Ascending aorta (tissue), 2 donors: ENCODE measurements at regions of chr5 and their contacts with region 1.

Region 1: DNA sequence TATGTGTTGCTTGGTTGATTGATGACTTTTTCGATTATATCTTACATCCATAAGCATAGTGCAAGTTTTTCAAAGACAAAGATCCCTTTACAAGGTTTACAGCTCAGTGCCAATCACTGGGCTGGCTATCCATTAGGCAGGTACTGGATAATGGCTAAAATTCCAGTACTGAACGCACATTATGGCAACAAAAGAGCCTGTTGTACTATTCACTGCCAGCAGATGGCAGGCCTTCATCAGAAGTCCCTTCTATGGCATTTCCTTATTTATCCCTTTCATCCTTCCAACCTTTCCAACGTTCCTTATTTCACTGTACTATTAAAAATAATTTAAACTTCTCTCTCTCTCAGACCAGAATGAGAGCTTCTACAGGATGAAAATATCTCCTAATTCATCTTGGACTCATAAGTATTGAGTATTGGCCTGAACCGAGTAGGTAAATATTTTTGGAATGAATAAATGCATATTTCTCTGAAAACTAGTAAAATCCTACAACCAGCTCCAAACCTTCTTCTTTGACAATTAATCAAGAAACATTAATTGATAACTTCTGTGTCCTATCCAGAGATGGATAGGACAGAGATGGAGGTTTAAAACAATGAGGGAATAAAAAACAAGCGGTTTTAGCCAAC is 6.7 kb upstream of the WNT8A start:
- DNase-seq: peak in 1 of 2 donors; percentile 77
- H3K4me3 ChIP-seq: no peak overlapping the region
- H3K27ac ChIP-seq: no peak overlapping the region
- H3K4me1 ChIP-seq: no peaks in the 10 kb centered on the region
- H3K27me3 ChIP-seq: no peaks in the 10 kb centered on the region
- CTCF ChIP-seq: peak; percentile 64 to 82 (median 68)

Region 2: DNA sequence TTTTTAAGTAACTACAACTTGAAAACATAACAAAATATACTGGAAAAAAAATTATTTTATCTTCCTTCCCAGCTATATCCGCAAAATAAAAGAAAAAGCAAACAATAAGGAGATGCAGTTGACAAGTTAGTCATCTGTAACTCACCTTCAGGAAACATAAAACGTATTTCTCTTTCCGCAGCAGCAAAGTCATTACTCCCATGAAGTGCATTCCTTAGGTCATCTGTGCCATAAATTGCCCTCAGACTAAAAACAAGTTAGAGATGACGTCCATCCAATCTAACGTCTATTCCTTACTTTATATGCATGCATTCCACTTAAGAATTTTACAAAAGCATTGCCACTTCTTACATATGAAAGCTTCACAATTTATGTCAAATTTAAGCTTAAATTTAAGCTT is 51.2 kb after region 1 on chr5:
- intact Hi-C with region 1: loop called (anchors 1 kb)
- DNase-seq: no peak
- H3K4me3 ChIP-seq: no peak overlapping the region
- H3K27ac ChIP-seq: no peak overlapping the region
- H3K4me1 ChIP-seq: no peaks in the 10 kb centered on the region
- H3K27me3 ChIP-seq: no peaks in the 10 kb centered on the region
- CTCF ChIP-seq: no peak